Breast epithelium (tissue), 4 donors: ENCODE measurements at regions of chr17 and their contacts with region 1.

Region 1: GRCh38 chr17:34361478-34362061 is 1.5 kb downstream of the CCL1 start:
- DNase-seq: peak; percentile 85 to 90
- H3K4me3 ChIP-seq: no peak overlapping the region
- H3K27ac ChIP-seq: no peak overlapping the region
- H3K4me1 ChIP-seq: no peaks in the 10 kb centered on the region
- H3K27me3 ChIP-seq: no peaks in the 10 kb centered on the region
- CTCF ChIP-seq: peak; percentile 86 to 100 (median 99)
- POLR2A ChIP-seq: no peak

Region 2: DNA sequence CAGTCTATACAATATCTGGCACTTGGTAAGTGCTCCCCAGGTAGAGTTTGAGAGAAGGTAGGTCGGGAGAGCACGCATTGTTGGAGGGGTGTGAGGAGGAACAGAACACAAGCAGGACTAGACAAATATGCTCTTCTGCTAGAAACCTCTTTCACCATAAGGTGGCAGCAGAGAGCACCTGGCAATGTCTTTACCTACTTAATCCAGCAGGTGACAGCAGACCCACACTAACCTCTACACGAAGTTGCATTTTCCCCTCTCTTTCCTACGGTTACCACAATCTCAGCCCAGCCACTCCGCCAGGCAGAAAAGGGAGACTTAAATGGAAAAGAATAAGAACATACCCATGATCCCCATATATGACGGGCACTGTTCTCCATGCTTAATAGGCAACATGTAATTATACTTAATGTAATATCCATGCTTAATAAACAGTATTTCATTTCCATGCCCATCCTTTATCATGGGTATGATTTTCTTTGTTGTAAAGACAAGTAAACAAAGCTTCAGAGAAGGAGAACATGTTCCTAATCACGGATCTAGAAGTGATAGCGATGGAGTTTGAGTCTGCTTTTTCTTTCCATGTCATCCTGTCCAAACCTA is 161.5 kb before region 1 on chr17:
- intact Hi-C with region 1: loop called (anchors 10 kb)
- DNase-seq: peak; percentile 74 to 78
- H3K4me3 ChIP-seq: no peak overlapping the region
- H3K27ac ChIP-seq: no peak overlapping the region
- H3K4me1 ChIP-seq: no peaks in the 10 kb centered on the region
- H3K27me3 ChIP-seq: peaks cover 0 to 3% of the 10 kb centered on the region in 2 donors
- CTCF ChIP-seq: peak; percentile 100
- POLR2A ChIP-seq: no peak

Region 3: DNA sequence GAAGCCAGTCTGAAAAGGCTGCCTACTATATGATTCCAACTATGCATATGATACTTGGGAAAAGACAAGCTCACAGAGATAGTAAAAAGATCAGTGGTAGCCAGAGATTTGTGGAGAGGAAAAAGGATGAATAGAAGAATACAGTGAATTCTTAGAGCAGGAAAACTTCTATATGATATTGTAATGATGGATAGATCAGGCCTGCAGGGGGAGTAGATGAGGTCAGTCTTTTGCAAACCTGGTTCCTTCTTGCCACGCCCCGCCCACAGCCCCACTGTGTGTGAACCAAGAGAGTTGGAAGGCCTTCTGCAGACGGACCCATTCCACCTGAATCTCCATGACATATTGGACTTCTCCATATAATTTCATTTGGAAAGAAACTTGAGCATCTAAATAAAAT is 43.1 kb before region 1 on chr17:
- intact Hi-C with region 1: no loop called
- DNase-seq: no peak
- H3K4me3 ChIP-seq: no peak overlapping the region
- H3K27ac ChIP-seq: peak overlapping the region in 1 of 2 donors; percentile 61
- H3K4me1 ChIP-seq: peaks cover 0 to 6% of the 10 kb centered on the region in 2 donors
- H3K27me3 ChIP-seq: no peaks in the 10 kb centered on the region
- CTCF ChIP-seq: no peak
- POLR2A ChIP-seq: no peak

Region 4: DNA sequence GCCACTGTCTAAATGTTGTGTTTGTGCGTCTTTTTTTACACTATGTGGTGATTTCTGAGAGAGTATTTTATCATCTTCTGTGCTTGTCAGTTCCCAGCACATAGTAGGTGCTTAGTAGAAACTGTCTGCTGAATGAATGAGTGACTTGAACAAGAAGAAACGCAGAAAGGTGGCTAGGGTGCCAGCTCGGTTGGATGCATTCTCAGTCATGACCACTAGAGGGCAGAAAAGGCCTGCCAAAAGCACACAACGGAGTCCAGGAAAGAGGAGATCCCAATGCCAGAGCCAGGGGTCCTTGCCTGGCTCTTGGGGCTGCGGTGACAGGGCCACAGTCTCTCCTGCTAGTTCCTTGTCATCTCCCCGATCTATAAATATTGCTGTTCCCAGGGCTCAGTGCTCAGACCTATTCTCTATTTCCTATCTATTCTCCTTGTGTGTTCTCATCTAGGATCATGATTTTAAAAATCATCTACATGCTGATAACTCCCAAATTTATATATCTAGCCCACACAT is 58.7 kb after region 1 on chr17:
- intact Hi-C with region 1: no loop called
- DNase-seq: peak in 1 of 2 donors; percentile 38
- H3K4me3 ChIP-seq: no peak overlapping the region
- H3K27ac ChIP-seq: no peak overlapping the region
- H3K4me1 ChIP-seq: no peaks in the 10 kb centered on the region
- H3K27me3 ChIP-seq: peaks cover 0 to 56% of the 10 kb centered on the region in 2 donors
- CTCF ChIP-seq: peak; percentile 87 to 89 (median 88)
- POLR2A ChIP-seq: no peak